Activated CD4-positive, alpha-beta T cell treated with anti-CD3 and anti-CD28 coated beads, Interleukin-2, amount 10 ng/mL, durations not matched to agents 7 days and 5 days (primary cell): ENCODE measurements at regions of chr2 and their contacts with region 1.

Region 1: DNA sequence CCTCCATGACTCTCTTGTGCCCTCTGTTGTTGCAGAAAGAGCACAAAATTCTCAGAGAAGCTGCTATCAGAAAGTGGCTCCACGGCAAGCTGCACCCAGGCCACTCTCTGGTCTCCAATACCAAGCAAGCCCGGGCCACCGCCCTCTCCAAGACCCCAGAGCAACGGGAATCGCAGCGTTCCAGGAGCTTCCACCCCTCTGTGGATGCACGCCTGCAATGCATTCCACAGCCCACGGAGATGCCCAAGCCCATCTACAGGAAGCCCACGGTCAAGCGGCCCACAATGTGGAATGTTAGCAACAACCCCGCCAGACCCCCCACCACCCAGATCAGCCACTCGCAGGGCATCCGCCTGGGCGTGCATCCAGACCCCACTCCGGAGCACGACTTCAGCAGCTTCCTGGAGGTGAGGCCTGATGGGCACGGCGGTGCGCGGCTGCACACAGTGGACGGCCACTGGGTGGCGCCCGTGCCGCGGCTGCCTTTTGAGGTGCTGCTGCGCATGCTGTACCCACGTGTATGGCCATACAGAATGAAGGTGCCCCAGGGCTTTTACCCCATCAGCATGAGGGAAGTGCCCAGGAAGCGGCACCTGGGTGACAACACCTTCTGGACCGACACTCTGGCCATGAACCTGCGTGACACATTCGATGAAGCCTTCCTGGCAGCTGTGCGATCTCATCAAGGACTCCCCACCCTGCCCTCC is 6.3 kb downstream of the ANKRD53 start:
- DNase-seq: peak; percentile 85
- H3K4me3 Mint-ChIP-seq: peak overlapping the region; percentile 4
- H3K27ac Mint-ChIP-seq: peak overlapping the region; percentile 54
- H3K4me1 Mint-ChIP-seq: peaks cover 19% of the 10 kb centered on the region
- H3K27me3 Mint-ChIP-seq: no peaks in the 10 kb centered on the region

Region 2: GRCh38 chr2:71000780-71001591 is 16.3 kb after region 1 on chr2:
- CTCF ChIA-PET with region 1: interaction called, 16 read pairs
- POLR2A ChIA-PET with region 1: interaction called, 5 read pairs
- DNase-seq: peak; percentile 84
- H3K4me3 Mint-ChIP-seq: peak overlapping the region; percentile 48
- H3K27ac Mint-ChIP-seq: peak overlapping the region; percentile 78
- H3K4me1 Mint-ChIP-seq: peaks cover 31% of the 10 kb centered on the region
- H3K27me3 Mint-ChIP-seq: no peaks in the 10 kb centered on the region